ENCODE measurements at regions of chr9 and their contacts with region 1.

Region 1: GRCh38 chr9:122264360-122265148 is at the starts of genes MRRF and RBM18:
- DNase-seq: peak; percentile 93
- H3K4me3 ChIP-seq: peak within 1 kb of the TSS; percentile 87
- H3K27ac ChIP-seq: peak within 1 kb of the TSS; percentile 90
- H3K4me1 ChIP-seq: peaks cover 51% of the 10 kb centered on the region
- CTCF ChIP-seq: no peak
- total RNA-seq, gene MRRF: 38.7 and 46.1 TPM in 2 replicates
- total RNA-seq, gene RBM18: 7.2 and 8.3 TPM in 2 replicates

Region 2: DNA sequence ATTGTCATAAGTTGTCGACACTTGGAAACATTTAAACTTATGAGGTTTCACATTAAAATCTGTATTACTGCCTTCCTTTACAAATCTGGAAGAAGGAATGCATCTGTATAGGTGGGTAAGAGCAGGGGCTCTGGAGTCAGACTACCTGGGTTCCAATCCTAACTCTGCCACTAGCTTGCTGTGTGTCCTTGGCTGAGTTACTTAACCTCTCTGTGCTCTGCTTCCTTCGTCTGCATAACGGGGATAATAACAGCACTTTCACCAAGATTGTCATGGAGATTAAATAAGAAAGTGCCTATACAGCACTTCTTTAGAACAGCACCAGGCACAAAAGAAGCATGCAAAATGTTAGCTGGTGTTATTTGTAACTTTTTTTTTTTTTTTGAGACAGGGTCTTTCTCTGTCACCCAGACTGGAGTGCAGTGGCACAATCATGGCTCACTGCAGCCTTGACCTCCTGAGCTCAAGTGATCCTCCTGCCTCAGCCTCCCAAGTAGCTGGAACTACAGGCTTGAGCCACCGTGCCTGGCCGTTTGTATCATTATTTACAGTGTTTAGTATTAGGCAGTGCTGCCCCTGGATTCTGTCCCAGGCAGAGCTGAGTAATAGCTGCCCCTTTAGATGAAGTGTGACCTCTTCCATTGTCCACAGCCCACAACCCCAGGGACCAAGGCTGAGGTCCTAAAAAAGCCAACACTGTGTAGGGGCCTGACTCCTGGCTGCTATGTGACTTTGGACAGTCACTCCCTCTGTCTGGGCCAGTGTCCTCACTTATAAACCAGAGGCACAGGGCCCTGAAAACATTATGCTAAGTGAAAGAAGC is 146.0 kb before region 1 on chr9:
- CTCF ChIA-PET with region 1: no interaction called
- POLR2A ChIA-PET with region 1: no interaction called
- intact Hi-C with region 1: no loop called
- DNase-seq: no peak
- H3K4me3 ChIP-seq: no peak overlapping the region
- H3K27ac ChIP-seq: no peak overlapping the region
- H3K4me1 ChIP-seq: peaks cover 5% of the 10 kb centered on the region
- CTCF ChIP-seq: no peak

Region 3: GRCh38 chr9:122159026-122159924 is 105.3 kb before region 1 on chr9 and contains the starts of genes MORN5 and NDUFA8:
- CTCF ChIA-PET with region 1: interaction called, 3 read pairs
- POLR2A ChIA-PET with region 1: no interaction called
- intact Hi-C with region 1: loop called (anchors 1 kb)
- DNase-seq: peak; percentile 98
- H3K4me3 ChIP-seq: peak within 1 kb of the TSS; percentile 81
- H3K27ac ChIP-seq: peak within 1 kb of the TSS; percentile 24
- H3K4me1 ChIP-seq: peaks cover 7% of the 10 kb centered on the region
- CTCF ChIP-seq: no peak
- total RNA-seq, gene MORN5: not detected in 2 replicates
- total RNA-seq, gene NDUFA8: 24.2 and 29.7 TPM in 2 replicates

Region 4: GRCh38 chr9:122286764-122287163 is 22.2 kb after region 1 on chr9:
- CTCF ChIA-PET with region 1: no interaction called
- POLR2A ChIA-PET with region 1: interaction called, 9 read pairs
- intact Hi-C with region 1: loop called (anchors 2 kb)
- DNase-seq: peak; percentile 71
- H3K4me3 ChIP-seq: peak overlapping the region; percentile 43
- H3K27ac ChIP-seq: peak overlapping the region; percentile 85
- H3K4me1 ChIP-seq: peaks cover 43% of the 10 kb centered on the region
- CTCF ChIP-seq: no peak

Region 5: GRCh38 chr9:122931226-122932121 is 666.9 kb after region 1 on chr9 and contains the start of gene ZBTB26:
- CTCF ChIA-PET with region 1: no interaction called
- POLR2A ChIA-PET with region 1: no interaction called
- intact Hi-C with region 1: loop called (anchors 10 kb)
- DNase-seq: peak; percentile 94
- H3K4me3 ChIP-seq: peak within 1 kb of the TSS; percentile 85
- H3K27ac ChIP-seq: peak within 1 kb of the TSS; percentile 70
- H3K4me1 ChIP-seq: peaks cover 19% of the 10 kb centered on the region
- CTCF ChIP-seq: no peak
- total RNA-seq, gene ZBTB26: 7.6 and 10.8 TPM in 2 replicates

Region 6: GRCh38 chr9:123571240-123571639 is 1306.7 kb after region 1 on chr9:
- CTCF ChIA-PET with region 1: no interaction called
- POLR2A ChIA-PET with region 1: no interaction called
- intact Hi-C with region 1: no loop called
- DNase-seq: no peak
- H3K4me3 ChIP-seq: no peak overlapping the region
- H3K27ac ChIP-seq: no peak overlapping the region
- H3K4me1 ChIP-seq: no peaks in the 10 kb centered on the region
- CTCF ChIP-seq: no peak